ENCODE measurements at regions of chr10 and their contacts with region 1.

Region 1: DNA sequence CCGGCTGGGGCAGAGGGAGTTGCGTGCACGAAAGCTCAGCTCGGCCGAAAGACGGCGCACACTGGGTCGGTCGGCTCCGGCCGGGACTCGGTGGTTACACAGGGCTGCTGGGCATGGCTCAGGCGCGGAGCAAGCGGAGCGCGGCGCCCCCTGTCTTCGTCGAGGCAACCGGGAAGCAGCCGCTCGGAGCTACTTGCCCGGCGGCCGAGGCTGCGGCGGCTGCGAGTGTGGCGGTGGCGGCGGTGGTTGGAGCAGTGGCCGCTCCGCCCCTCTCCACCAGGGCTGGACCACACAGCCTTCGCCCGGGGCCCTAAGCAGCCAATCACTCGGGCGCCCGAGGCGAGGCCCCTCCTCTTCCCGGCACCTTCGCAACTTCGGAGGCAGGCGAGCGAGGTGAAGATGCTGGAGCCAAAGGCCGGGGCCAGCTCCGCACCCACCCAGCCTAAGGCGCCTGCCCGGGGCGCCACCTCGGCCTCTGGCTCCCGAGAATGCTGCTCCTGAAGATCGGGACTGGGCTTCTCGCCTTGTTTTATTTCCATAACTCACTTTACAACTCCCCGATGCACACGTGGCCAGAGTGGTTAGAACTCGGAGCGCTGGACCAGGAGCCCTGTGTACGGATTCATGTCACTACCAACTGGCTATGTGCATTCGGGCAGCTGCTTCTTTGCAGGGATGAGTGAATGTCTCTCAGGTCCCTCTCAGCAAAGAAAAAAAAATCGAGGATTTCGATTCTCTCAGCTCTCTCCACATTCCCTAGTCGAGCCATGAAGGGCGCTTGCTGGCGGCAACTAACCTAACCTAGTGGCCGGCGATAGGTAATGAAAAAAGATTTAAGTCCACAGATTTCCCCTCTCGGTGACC is at the start of gene TLL2:
- DNase-seq: peak; percentile 95
- H3K4me3 ChIP-seq: peak within 1 kb of the TSS; percentile 59 to 74 (median 60)
- H3K27ac ChIP-seq: peak within 1 kb of the TSS in 2 of 4 donors; percentile 54 to 63
- H3K4me1 ChIP-seq: peaks cover 25 to 27% (median 26%) of the 10 kb centered on the region in 4 donors
- H3K27me3 ChIP-seq: peaks cover 0 to 22% (median 4%) of the 10 kb centered on the region in 4 donors
- CTCF ChIP-seq: peak; percentile 69 to 76 (median 75)
- EP300 ChIP-seq: no peak
- POLR2A ChIP-seq: no peak
- total RNA-seq, gene TLL2: 0.17 to 2.1 (median 0.27) TPM

Region 2: GRCh38 chr10:96176985-96177384 is 336.9 kb before region 1 on chr10:
- intact Hi-C with region 1: no loop called
- DNase-seq: no peak
- H3K4me3 ChIP-seq: no peak overlapping the region
- H3K27ac ChIP-seq: no peak overlapping the region
- H3K4me1 ChIP-seq: no peaks in the 10 kb centered on the region
- H3K27me3 ChIP-seq: no peaks in the 10 kb centered on the region
- CTCF ChIP-seq: no peak
- EP300 ChIP-seq: no peak
- POLR2A ChIP-seq: no peak

Region 3: GRCh38 chr10:96374985-96375830 is 138.7 kb before region 1 on chr10:
- intact Hi-C with region 1: loop called (anchors 5 kb)
- DNase-seq: peak; percentile 94
- H3K4me3 ChIP-seq: peak overlapping the region; percentile 49 to 60 (median 50)
- H3K27ac ChIP-seq: no peak overlapping the region
- H3K4me1 ChIP-seq: peaks cover 7 to 34% (median 32%) of the 10 kb centered on the region in 4 donors
- H3K27me3 ChIP-seq: no peaks in the 10 kb centered on the region
- CTCF ChIP-seq: peak in 2 of 3 experiments; percentile 97
- EP300 ChIP-seq: no peak
- POLR2A ChIP-seq: no peak

Region 4: GRCh38 chr10:96395931-96396877 is 117.7 kb before region 1 on chr10:
- intact Hi-C with region 1: loop called (anchors 2 kb)
- DNase-seq: peak; percentile 95
- H3K4me3 ChIP-seq: no peak overlapping the region
- H3K27ac ChIP-seq: no peak overlapping the region
- H3K4me1 ChIP-seq: peaks cover 5 to 9% (median 6%) of the 10 kb centered on the region in 4 donors
- H3K27me3 ChIP-seq: peaks cover 0 to 21% (median 0%) of the 10 kb centered on the region in 4 donors
- CTCF ChIP-seq: peak; percentile 79 to 89 (median 85)
- EP300 ChIP-seq: no peak
- POLR2A ChIP-seq: no peak

Measured in esophagus muscularis mucosa (tissue), 4 donors.